Activated CD4-positive, alpha-beta memory T cell treated with anti-CD3 and anti-CD28 coated beads for 36 hours (primary cell): ENCODE measurements at regions of chr5 and their contacts with region 1.

Region 1: GRCh38 chr5:62460578-62460983 is 48.0 kb downstream of the IPO11 start:
- DNase-seq: no peak
- H3K4me3 Mint-ChIP-seq: no peak overlapping the region
- H3K27ac Mint-ChIP-seq: no peak overlapping the region
- H3K4me1 Mint-ChIP-seq: no peaks in the 10 kb centered on the region
- H3K27me3 Mint-ChIP-seq: no peaks in the 10 kb centered on the region

Region 2: DNA sequence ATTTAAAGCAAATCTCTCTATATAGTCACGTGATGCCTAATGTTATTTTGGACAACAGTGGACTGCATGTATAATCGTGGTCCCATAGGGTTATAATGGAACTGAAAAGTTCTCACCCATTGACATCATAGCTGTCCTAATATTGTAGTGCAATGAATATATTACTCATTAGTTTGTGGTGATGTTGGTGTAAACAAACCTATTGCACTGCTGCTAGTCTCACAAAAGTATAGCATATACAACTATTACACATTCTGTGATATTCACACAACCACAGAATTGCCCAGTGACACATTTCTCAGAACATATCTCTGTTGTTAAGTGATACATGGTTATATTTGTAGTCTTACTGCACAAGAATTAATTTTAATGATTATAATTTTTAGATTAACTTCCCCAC is 10.3 kb before region 1 on chr5:
- CTCF ChIA-PET with region 1: interaction called, 15 read pairs
- POLR2A ChIA-PET with region 1: no interaction called
- intact Hi-C with region 1: no loop called
- DNase-seq: no peak
- H3K4me3 Mint-ChIP-seq: no peak overlapping the region
- H3K27ac Mint-ChIP-seq: no peak overlapping the region
- H3K4me1 Mint-ChIP-seq: no peaks in the 10 kb centered on the region
- H3K27me3 Mint-ChIP-seq: no peaks in the 10 kb centered on the region

Region 3: GRCh38 chr5:62475072-62475471 is 14.5 kb after region 1 on chr5:
- CTCF ChIA-PET with region 1: interaction called, 11 read pairs
- POLR2A ChIA-PET with region 1: no interaction called
- intact Hi-C with region 1: no loop called
- DNase-seq: no peak
- H3K4me3 Mint-ChIP-seq: no peak overlapping the region
- H3K27ac Mint-ChIP-seq: no peak overlapping the region
- H3K4me1 Mint-ChIP-seq: no peaks in the 10 kb centered on the region
- H3K27me3 Mint-ChIP-seq: no peaks in the 10 kb centered on the region

Region 4: DNA sequence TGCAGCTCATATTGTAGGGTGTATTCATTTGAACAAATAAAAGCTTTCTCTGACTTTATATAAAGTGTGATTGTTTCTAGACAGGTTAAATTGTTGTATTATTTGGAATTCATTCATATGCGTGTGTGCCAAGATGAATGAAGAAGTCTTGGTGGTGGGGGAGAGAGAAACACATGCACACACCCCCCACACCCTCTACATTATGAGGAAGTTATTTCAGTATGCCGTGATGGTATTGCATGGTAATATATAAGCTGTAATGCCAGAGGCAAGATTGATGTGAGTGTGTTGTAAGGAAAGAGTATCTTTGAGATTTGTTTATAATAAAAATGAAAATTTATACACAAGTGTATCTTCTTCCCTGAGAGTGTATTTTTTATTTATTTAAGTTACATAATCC is 23.0 kb after region 1 on chr5:
- CTCF ChIA-PET with region 1: interaction called, 12 read pairs
- POLR2A ChIA-PET with region 1: no interaction called
- intact Hi-C with region 1: no loop called
- DNase-seq: no peak
- H3K4me3 Mint-ChIP-seq: no peak overlapping the region
- H3K27ac Mint-ChIP-seq: no peak overlapping the region
- H3K4me1 Mint-ChIP-seq: no peaks in the 10 kb centered on the region
- H3K27me3 Mint-ChIP-seq: no peaks in the 10 kb centered on the region

Region 5: DNA sequence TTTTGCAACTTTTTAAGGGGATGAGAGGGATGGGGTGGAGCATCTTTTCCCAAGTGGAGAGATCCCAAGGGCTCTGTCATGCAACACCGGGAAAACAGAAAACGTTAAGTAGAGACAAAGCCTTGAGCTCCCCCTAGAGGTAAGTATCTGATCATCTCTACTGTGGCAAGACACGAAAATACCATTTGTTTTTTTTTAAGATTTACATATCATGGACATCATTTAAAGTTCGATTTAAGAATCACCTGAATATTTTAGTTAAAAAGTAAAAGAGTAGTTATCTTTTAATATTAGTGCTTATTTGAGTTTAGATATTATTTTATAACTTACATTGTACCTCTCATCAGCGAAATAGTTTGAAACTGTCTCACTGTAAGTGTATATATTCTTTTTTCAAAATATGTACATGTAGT is 318.4 kb after region 1 on chr5:
- CTCF ChIA-PET with region 1: interaction called, 13 read pairs
- POLR2A ChIA-PET with region 1: interaction called, 3 read pairs
- intact Hi-C with region 1: loop called (anchors 1 kb)
- DNase-seq: no peak
- H3K4me3 Mint-ChIP-seq: no peak overlapping the region
- H3K27ac Mint-ChIP-seq: no peak overlapping the region
- H3K4me1 Mint-ChIP-seq: no peaks in the 10 kb centered on the region
- H3K27me3 Mint-ChIP-seq: peaks cover 3% of the 10 kb centered on the region

Region 6: GRCh38 chr5:63351164-63351563 is 890.6 kb after region 1 on chr5:
- CTCF ChIA-PET with region 1: no interaction called
- POLR2A ChIA-PET with region 1: no interaction called
- intact Hi-C with region 1: no loop called
- DNase-seq: no peak
- H3K4me3 Mint-ChIP-seq: no peak overlapping the region
- H3K27ac Mint-ChIP-seq: no peak overlapping the region
- H3K4me1 Mint-ChIP-seq: no peaks in the 10 kb centered on the region
- H3K27me3 Mint-ChIP-seq: no peaks in the 10 kb centered on the region